AG04450 (cell line): ENCODE measurements at regions of chr3 and their contacts with region 1.

Region 1: GRCh38 chr3:52428151-52429005 is 16.5 kb downstream of the SEMA3G start:
- DNase-seq: peak; percentile 71
- H3K4me3 ChIP-seq: no peak overlapping the region
- H3K27ac ChIP-seq: no peak overlapping the region
- H3K27me3 ChIP-seq: peaks cover 8% of the 10 kb centered on the region
- CTCF ChIP-seq: peak; percentile 89

Region 2: GRCh38 chr3:52193065-52193464 is 235.3 kb before region 1 on chr3:
- CTCF ChIA-PET with region 1: no interaction called
- POLR2A ChIA-PET with region 1: no interaction called
- DNase-seq: no peak
- H3K4me3 ChIP-seq: no peak overlapping the region
- H3K27ac ChIP-seq: no peak overlapping the region
- H3K27me3 ChIP-seq: no peaks in the 10 kb centered on the region
- CTCF ChIP-seq: no peak

Region 3: DNA sequence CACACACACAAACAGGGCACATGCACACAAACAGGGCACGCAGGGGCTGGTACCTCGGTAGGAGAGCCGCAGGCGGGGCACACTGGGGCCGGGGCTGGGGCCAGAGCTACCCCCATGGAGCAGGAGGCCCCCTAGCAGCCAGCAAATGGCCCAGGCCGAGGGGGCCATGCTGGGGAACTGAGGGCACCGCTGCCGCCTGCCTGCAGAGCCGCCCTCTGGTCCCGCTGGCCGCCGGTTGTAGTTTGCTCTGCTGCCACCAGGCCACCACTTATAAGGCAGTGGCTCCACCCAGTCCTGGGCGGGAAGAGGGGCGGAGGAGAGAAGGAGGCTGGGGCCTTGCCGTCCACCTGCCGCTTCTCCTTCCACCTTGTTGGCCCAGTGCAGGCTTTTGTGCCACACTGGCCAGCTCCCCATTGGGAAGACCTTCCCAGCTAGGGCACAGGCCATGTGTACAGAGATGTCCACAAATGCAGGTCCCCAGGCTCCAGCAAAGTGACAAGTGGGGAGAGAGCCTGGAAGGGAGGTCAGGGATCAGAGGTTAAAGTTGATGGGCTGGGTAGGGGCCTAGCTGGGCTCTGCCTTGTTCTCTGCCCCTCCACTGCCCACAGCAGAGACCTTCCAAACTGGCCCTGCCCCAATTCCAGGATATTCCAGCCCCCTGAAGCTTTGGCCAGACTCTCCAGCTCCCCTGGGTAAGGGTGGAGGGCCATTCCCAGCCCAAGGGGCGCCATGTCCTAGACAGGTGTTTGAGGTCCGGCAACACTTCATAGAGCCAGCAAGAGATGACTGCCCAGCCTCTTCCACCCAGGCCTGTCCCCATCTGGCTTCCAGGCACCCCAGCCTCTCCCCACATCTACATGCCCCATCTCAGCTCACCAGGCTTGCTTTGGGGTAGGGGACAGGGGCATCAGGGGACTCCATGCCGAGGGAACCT is 16.7 kb after region 1 on chr3 and contains the start of gene SEMA3G:
- CTCF ChIA-PET with region 1: interaction called, 359 read pairs
- POLR2A ChIA-PET with region 1: interaction called, 4 read pairs
- DNase-seq: no peak
- H3K4me3 ChIP-seq: no peak within 1 kb of the TSS
- H3K27ac ChIP-seq: no peak within 1 kb of the TSS
- H3K27me3 ChIP-seq: no peaks in the 10 kb centered on the region
- CTCF ChIP-seq: peak; percentile 51
- polyA plus RNA-seq, gene SEMA3G: 0.02 TPM in 1 of 2 replicates, not detected in the other